ENCODE measurements at regions of chr4 and their contacts with region 1.

Region 1: GRCh38 chr4:95660719-95661118 is 111.9 kb upstream of the UNC5C start:
- DNase-seq: no peak
- ATAC-seq: no peak

Region 2: DNA sequence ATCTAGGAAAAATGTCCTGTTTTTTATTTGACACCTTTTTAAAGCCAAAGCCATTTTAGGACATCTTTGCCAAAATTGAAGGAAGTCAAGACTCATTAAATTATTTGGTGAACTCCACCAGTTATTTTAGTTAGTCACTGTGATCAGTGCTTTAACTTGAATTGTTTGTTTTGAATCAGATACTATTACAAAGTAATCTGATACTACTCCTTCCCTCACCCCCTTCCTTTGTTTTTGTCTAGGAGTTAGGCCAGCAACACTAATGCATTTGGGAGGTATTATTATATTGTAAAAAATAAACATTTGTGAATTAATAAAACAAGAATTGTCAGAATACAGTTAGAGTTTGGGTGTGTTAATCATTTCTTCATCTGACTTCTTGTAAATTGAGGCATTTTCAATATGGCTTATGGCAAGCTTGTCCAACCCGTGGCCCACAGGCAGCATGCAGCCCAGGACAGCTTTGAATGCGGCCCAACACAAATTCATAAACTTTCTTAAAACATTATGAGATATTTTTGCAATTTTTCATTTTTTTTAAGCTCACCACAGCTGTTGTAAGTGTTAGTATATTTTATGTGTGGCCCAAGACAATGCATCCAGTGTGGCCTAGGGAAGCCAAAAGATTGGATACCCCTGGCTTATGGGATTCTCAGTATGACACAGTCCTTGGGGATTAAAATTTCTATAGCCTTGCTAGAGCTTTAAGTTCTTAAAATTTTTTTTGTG is 720.8 kb before region 1 on chr4:
- intact Hi-C with region 1: no loop called
- DNase-seq: no peak
- ATAC-seq: no peak

Region 3: DNA sequence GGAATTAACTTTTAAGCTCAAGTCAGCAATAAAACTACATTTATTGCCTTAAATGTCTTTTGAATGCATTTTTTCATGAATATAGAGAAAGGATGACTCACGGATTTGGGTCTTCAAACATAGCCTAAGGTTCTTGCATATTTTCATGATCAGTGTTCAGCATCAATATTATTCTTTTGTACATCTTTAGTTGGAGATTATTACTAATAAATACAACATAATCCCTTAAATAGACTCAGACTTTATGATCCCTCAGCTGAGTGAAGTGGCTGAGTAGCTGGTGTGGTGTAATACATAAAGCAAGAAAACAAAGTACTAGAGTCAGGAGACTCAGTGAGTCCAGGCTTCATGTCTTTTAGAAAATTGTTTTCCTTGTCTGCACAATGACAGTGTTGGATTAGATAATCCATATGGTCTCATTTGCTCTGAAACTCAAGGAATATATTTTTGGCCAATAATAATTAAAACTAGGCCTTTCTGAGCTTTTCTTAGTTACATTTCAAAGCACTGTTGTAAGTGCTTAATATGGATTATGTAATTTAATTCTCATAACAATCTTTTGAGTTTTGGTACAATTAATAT is 33.6 kb before region 1 on chr4:
- intact Hi-C with region 1: loop called (anchors 5 kb)
- DNase-seq: no peak
- ATAC-seq: no peak

Measured in Right ventricle myocardium superior (tissue), 1 donor.